ENCODE measurements at regions of chr1 and their contacts with region 1.

Region 1: DNA sequence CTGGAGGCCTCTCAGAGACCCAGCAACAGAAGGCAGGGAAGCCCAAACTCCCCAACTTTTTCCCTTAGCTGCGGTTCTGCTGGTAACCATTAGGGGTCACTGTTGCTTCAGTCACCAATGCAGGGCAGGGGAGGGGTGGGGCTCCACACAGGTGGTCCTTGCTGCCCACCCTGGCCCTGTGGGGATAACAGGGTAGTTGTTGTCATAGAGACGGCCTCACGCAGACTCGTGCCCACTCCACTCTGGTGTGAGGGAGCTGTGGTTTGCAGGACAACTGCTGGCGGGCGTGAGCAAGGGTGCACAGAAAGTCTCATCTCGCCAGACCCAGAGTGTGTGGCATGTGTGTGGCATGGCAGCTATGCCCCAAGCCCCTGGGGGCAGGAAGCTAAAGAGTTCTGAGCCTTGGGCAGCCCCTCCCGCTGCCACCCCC is 19.9 kb downstream of the INSRR start:
- DNase-seq: peak; percentile 29 to 63 (median 45)
- H3K4me3 ChIP-seq: no peak overlapping the region
- H3K4me3 Mint-ChIP-seq: no peak overlapping the region
- H3K27ac ChIP-seq: no peak overlapping the region
- H3K27ac Mint-ChIP-seq: peak overlapping the region in 4 of 8 donors; percentile 22 to 84 (median 70)
- H3K4me1 ChIP-seq: no peaks in the 10 kb centered on the region
- H3K4me1 Mint-ChIP-seq: peaks cover 10 to 17% (median 17%) of the 10 kb centered on the region in 3 donors
- H3K27me3 ChIP-seq: peaks cover 12% of the 10 kb centered on the region
- H3K27me3 Mint-ChIP-seq: peaks cover 32 to 76% of the 10 kb centered on the region in 2 donors

Region 2: DNA sequence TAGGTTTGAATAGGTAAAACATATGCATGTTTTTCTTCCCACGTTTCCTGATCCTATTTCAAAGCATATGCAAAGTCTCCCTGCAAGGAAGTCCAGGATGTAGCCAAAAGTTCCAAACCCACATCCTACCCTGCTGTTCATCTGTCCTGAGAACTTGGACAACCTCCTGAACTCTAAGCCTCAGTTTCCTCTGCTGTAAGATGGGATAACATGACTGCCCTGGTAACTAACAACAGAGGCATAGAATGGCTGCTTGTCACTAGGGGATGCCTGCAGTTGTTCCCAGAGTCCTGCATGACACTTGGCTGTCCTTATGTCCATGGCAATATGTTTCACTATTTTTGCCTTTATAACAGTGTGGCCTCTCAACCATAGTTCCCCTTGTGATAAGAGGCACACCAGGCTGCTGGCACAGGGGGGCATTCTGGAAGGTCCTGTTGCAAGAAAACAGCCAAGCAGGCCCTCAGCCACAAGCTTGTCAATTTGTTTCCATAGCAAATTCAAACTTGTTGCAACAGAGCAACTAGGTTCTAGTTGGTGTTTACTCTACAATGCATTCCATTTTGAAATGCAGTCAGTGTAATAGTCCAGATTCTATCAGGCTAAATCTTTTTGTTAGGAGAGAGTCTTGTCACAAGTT is 86.0 kb before region 1 on chr1:
- CTCF ChIA-PET with region 1: no interaction called
- POLR2A ChIA-PET with region 1: no interaction called
- DNase-seq: no peak
- H3K4me3 ChIP-seq: no peak overlapping the region
- H3K4me3 Mint-ChIP-seq: peak overlapping the region; percentile 86 to 97 (median 92)
- H3K27ac ChIP-seq: peak overlapping the region; percentile 85
- H3K27ac Mint-ChIP-seq: peak overlapping the region; percentile 15 to 97 (median 90)
- H3K4me1 ChIP-seq: peaks cover 34% of the 10 kb centered on the region
- H3K4me1 Mint-ChIP-seq: peaks cover 37 to 53% (median 46%) of the 10 kb centered on the region in 3 donors
- H3K27me3 ChIP-seq: no peaks in the 10 kb centered on the region
- H3K27me3 Mint-ChIP-seq: no peaks in the 10 kb centered on the region

Region 3: DNA sequence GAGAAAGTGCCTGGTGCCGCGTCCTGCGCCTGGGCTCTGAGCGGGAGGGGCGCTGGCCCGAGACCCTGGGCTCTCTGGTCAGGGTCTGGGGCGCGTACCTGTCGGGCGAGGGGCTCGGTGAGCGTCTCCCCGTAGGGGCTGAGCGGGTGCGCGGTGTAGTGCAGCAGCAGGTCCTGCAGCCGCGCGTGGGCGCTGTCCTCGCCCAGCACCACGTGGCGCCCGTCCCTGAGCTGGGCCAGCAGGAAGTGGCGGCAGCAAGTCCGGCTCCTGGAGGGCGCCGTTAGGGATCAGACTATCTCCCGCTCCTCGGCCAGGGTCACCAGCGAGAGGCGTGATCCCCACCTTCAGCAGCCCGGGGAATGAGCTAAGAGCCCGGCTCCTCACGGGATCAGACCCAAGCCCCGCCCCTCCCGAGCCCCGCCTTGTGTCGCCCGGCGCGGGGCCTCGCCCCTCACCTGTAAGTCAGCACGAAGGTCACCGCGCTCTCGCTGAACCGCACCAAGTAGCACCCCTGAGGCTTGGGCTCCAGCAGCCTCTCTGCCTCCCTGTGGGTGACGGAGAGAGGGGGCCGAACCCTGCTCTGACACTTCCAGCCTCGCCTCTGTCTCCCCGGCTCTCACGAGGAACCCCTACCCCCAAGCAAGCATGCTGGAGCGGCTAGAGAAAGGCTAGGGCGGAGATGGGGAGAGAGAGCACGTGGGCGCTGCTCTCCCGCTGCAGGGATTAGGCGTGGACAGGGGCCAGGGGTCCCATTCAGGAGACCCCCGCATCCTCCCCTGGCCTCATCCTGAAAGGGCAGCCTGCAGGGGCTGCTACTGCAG is 25.0 kb before region 1 on chr1:
- CTCF ChIA-PET with region 1: interaction called, 17 read pairs
- POLR2A ChIA-PET with region 1: no interaction called
- DNase-seq: peak; percentile 77 to 86 (median 81)
- H3K4me3 ChIP-seq: peak overlapping the region; percentile 68
- H3K4me3 Mint-ChIP-seq: peak overlapping the region; percentile 85 to 98 (median 94)
- H3K27ac ChIP-seq: peak overlapping the region; percentile 97
- H3K27ac Mint-ChIP-seq: peak overlapping the region; percentile 88 to 100 (median 99)
- H3K4me1 ChIP-seq: peaks cover 60% of the 10 kb centered on the region
- H3K4me1 Mint-ChIP-seq: peaks cover 61 to 83% (median 64%) of the 10 kb centered on the region in 3 donors
- H3K27me3 ChIP-seq: no peaks in the 10 kb centered on the region
- H3K27me3 Mint-ChIP-seq: peaks cover 0 to 13% of the 10 kb centered on the region in 2 donors

Region 4: DNA sequence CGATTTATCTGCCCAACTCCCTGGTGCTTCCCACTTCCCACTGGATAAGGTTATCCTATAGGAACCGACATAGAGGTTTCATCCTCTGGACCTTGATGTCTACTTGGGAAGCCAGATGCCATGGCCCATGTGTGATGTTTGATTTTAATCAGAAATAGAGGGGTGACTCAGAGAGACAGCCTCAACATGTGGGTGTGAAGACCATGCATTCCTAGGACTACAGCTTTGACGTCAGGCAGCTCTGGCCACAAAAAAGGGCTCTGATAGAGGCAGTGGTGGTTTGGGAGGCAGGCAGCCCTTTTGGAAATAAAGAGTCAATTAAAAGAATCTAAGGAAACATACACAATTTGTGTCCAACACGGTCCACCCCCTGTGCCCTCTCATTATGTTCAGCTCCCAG is 17.2 kb before region 1 on chr1:
- CTCF ChIA-PET with region 1: interaction called, 18 read pairs
- POLR2A ChIA-PET with region 1: no interaction called
- DNase-seq: peak in 1 of 5 donors; percentile 56
- H3K4me3 ChIP-seq: no peak overlapping the region
- H3K4me3 Mint-ChIP-seq: peak overlapping the region in 1 of 7 donors; percentile 31
- H3K27ac ChIP-seq: no peak overlapping the region
- H3K27ac Mint-ChIP-seq: peak overlapping the region in 4 of 8 donors; percentile 7 to 50 (median 31)
- H3K4me1 ChIP-seq: peaks cover 13% of the 10 kb centered on the region
- H3K4me1 Mint-ChIP-seq: peaks cover 5 to 33% (median 5%) of the 10 kb centered on the region in 3 donors
- H3K27me3 ChIP-seq: no peaks in the 10 kb centered on the region
- H3K27me3 Mint-ChIP-seq: peaks cover 0 to 8% of the 10 kb centered on the region in 2 donors

Region 5: GRCh38 chr1:156852418-156852874 is 13.4 kb after region 1 on chr1:
- CTCF ChIA-PET with region 1: interaction called, 109 read pairs
- POLR2A ChIA-PET with region 1: interaction called, 3 read pairs
- DNase-seq: no peak
- H3K4me3 ChIP-seq: no peak overlapping the region
- H3K4me3 Mint-ChIP-seq: no peak overlapping the region
- H3K27ac ChIP-seq: no peak overlapping the region
- H3K27ac Mint-ChIP-seq: no peak overlapping the region
- H3K4me1 ChIP-seq: peaks cover 9% of the 10 kb centered on the region
- H3K4me1 Mint-ChIP-seq: peaks cover 12 to 20% (median 14%) of the 10 kb centered on the region in 3 donors
- H3K27me3 ChIP-seq: no peaks in the 10 kb centered on the region
- H3K27me3 Mint-ChIP-seq: peaks cover 4 to 6% of the 10 kb centered on the region in 2 donors

Region 6: GRCh38 chr1:156892190-156893047 is 53.4 kb after region 1 on chr1:
- CTCF ChIA-PET with region 1: interaction called, 32 read pairs
- POLR2A ChIA-PET with region 1: no interaction called
- DNase-seq: peak; percentile 76 to 86 (median 77)
- H3K4me3 ChIP-seq: peak overlapping the region; percentile 20
- H3K4me3 Mint-ChIP-seq: peak overlapping the region; percentile 70 to 83 (median 75)
- H3K27ac ChIP-seq: no peak overlapping the region
- H3K27ac Mint-ChIP-seq: peak overlapping the region in 1 of 8 donors; percentile 72
- H3K4me1 ChIP-seq: peaks cover 16% of the 10 kb centered on the region
- H3K4me1 Mint-ChIP-seq: peaks cover 15 to 20% (median 16%) of the 10 kb centered on the region in 3 donors
- H3K27me3 ChIP-seq: peaks cover 3% of the 10 kb centered on the region
- H3K27me3 Mint-ChIP-seq: peaks cover 46 to 69% of the 10 kb centered on the region in 2 donors

Region 7: DNA sequence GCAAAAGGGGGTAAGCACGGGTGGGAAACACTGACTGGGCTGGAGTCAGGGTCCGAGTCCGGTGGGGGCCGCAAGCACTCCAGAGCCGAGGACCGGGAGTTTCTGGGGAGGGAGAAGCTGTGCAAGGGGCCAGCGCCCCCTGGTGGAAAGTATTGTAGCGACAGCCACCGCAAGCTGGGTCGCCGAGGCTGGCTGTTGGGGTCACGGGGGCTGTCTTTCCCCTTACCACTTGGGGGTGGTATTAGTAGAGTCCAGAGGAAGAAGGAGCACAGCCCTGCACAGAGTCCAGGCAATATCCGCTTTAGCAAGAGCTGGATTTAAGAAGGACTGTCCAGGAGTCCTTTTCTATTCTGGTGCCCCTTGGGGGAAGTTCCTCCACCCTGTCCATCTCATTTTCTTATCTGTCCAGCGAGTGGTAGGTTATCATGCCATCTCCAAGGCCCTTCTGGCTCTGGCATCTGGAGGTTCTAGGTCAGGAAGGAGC is 317.1 kb after region 1 on chr1:
- CTCF ChIA-PET with region 1: no interaction called
- POLR2A ChIA-PET with region 1: no interaction called
- DNase-seq: peak; percentile 63 to 79 (median 70)
- H3K4me3 ChIP-seq: peak overlapping the region; percentile 12
- H3K4me3 Mint-ChIP-seq: peak overlapping the region in 5 of 7 donors; percentile 33 to 68 (median 56)
- H3K27ac ChIP-seq: no peak overlapping the region
- H3K27ac Mint-ChIP-seq: peak overlapping the region in 5 of 8 donors; percentile 1 to 87 (median 39)
- H3K4me1 ChIP-seq: peaks cover 23% of the 10 kb centered on the region
- H3K4me1 Mint-ChIP-seq: peaks cover 17 to 27% (median 24%) of the 10 kb centered on the region in 3 donors
- H3K27me3 ChIP-seq: peaks cover 8% of the 10 kb centered on the region
- H3K27me3 Mint-ChIP-seq: peaks cover 13 to 30% of the 10 kb centered on the region in 2 donors

Measured in CD8-positive, alpha-beta memory T cell (primary cell).